ENCODE measurements at regions of chr16 and their contacts with region 1.

Region 1: GRCh38 chr16:50806099-50807062 is 64.5 kb downstream of the CYLD start:
- DNase-seq: peak; percentile 91
- H3K4me3 ChIP-seq: peak overlapping the region in 2 of 3 experiments; percentile 19 to 63
- H3K27ac ChIP-seq: no peak overlapping the region
- H3K4me1 ChIP-seq: no peaks in the 10 kb centered on the region
- H3K27me3 ChIP-seq: no peaks in the 10 kb centered on the region
- CTCF ChIP-seq: peak; percentile 76 to 85
- POLR2A ChIP-seq: no peak

Region 2: GRCh38 chr16:50210266-50211038 is 595.9 kb before region 1 on chr16:
- CTCF ChIA-PET with region 1: interaction called, 21 read pairs
- POLR2A ChIA-PET with region 1: no interaction called
- dilution Hi-C with region 1: no loop called
- intact Hi-C with region 1: loop called (anchors 5 kb)
- DNase-seq: peak; percentile 86
- H3K4me3 ChIP-seq: no peak overlapping the region
- H3K27ac ChIP-seq: no peak overlapping the region
- H3K4me1 ChIP-seq: peaks cover 22% of the 10 kb centered on the region
- H3K27me3 ChIP-seq: no peaks in the 10 kb centered on the region
- CTCF ChIP-seq: peak; percentile 71 to 80
- POLR2A ChIP-seq: no peak

Region 3: DNA sequence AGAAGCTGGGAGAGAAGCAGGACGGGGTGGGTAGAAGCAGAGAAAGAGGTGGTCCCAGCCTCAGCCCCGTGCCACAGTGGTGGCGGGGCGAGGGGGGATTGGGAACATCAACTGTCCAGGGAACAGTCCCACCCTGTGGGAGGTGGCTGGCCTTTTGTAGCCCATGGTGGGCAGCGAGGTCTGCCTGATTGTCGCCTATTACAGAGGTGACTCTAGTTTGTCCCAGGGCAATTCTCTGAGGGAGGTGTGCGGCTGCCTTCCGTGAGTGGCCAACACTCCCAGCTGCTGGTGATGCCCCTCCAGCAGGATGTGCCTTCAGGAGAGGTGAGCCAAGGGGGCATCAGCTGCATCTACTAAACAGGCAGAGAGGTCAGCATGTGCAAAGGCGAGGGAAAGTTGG is 432.6 kb before region 1 on chr16:
- CTCF ChIA-PET with region 1: interaction called, 32 read pairs
- POLR2A ChIA-PET with region 1: no interaction called
- dilution Hi-C with region 1: no loop called
- intact Hi-C with region 1: loop called (anchors 2 kb)
- DNase-seq: no peak
- H3K4me3 ChIP-seq: no peak overlapping the region
- H3K27ac ChIP-seq: no peak overlapping the region
- H3K4me1 ChIP-seq: no peaks in the 10 kb centered on the region
- H3K27me3 ChIP-seq: peaks cover 2 to 5% of the 10 kb centered on the region in 2 experiments
- CTCF ChIP-seq: no peak
- POLR2A ChIP-seq: no peak

Region 4: GRCh38 chr16:50611332-50611934 is 194.9 kb before region 1 on chr16:
- CTCF ChIA-PET with region 1: interaction called, 36 read pairs
- POLR2A ChIA-PET with region 1: no interaction called
- dilution Hi-C with region 1: no loop called
- intact Hi-C with region 1: loop called (anchors 1 kb)
- DNase-seq: peak; percentile 58
- H3K4me3 ChIP-seq: no peak overlapping the region
- H3K27ac ChIP-seq: no peak overlapping the region
- H3K4me1 ChIP-seq: peaks cover 12% of the 10 kb centered on the region
- H3K27me3 ChIP-seq: no peaks in the 10 kb centered on the region
- CTCF ChIP-seq: peak in 1 of 2 donors; percentile 27
- POLR2A ChIP-seq: no peak

Region 5: GRCh38 chr16:50677351-50677750 is 129.0 kb before region 1 on chr16:
- CTCF ChIA-PET with region 1: interaction called, 179 read pairs
- POLR2A ChIA-PET with region 1: no interaction called
- dilution Hi-C with region 1: no loop called
- intact Hi-C with region 1: no loop called
- DNase-seq: no peak
- H3K4me3 ChIP-seq: no peak overlapping the region
- H3K27ac ChIP-seq: no peak overlapping the region
- H3K4me1 ChIP-seq: no peaks in the 10 kb centered on the region
- H3K27me3 ChIP-seq: no peaks in the 10 kb centered on the region
- CTCF ChIP-seq: peak in 1 of 2 donors; percentile 28
- POLR2A ChIP-seq: no peak

Region 6: GRCh38 chr16:50747207-50747956 is 59.0 kb before region 1 on chr16:
- CTCF ChIA-PET with region 1: interaction called, 24 read pairs
- POLR2A ChIA-PET with region 1: no interaction called
- dilution Hi-C with region 1: no loop called
- intact Hi-C with region 1: loop called (anchors 1 kb)
- DNase-seq: peak; percentile 33
- H3K4me3 ChIP-seq: no peak overlapping the region
- H3K27ac ChIP-seq: no peak overlapping the region
- H3K4me1 ChIP-seq: peaks cover 6% of the 10 kb centered on the region
- H3K27me3 ChIP-seq: no peaks in the 10 kb centered on the region
- CTCF ChIP-seq: no peak
- POLR2A ChIP-seq: no peak

Region 7: GRCh38 chr16:51762081-51762996 is 956.0 kb after region 1 on chr16:
- CTCF ChIA-PET with region 1: interaction called, 8 read pairs
- POLR2A ChIA-PET with region 1: no interaction called
- dilution Hi-C with region 1: no loop called
- intact Hi-C with region 1: loop called (anchors 1 kb)
- DNase-seq: peak; percentile 36
- H3K4me3 ChIP-seq: no peak overlapping the region
- H3K27ac ChIP-seq: no peak overlapping the region
- H3K4me1 ChIP-seq: no peaks in the 10 kb centered on the region
- H3K27me3 ChIP-seq: no peaks in the 10 kb centered on the region
- CTCF ChIP-seq: peak; percentile 82 to 84
- POLR2A ChIP-seq: no peak

Measured in endothelial cell of umbilical vein (primary cell).